ENCODE measurements at regions of chr10 and their contacts with region 1.

Region 1: DNA sequence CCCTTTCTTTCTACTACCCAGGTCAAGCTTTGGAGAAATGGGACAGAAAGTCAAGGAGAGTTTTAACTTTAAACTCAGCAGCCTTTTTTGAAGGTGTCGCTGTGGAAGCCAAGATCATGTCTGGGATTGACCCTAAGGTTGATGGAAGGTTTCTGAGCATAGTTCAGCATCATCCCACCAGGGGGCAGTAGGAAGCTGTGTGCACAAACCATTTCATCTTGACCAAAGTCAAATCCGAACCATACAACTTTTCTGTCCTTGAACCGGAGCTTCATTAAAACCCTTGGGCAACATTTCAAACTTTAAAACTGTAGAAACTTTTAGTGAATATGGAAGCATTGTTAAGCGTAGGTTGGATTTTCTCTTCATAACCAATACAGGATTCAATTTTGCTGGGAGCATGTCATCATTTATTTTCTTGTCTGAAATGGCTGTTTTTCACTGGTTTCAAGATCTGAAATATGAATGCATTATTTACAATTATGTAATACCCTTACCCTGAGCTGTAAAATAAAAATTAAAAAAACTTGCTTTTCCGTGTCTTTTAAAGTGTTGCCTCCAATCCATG is 214.4 kb upstream of the KIAA1217 start:
- DNase-seq: peak; percentile 24 to 61
- ATAC-seq: peak; percentile 55 to 89 (median 80)
- H3K4me3 ChIP-seq: peak overlapping the region in 1 of 10 donors; percentile 21
- H3K27ac ChIP-seq: peak overlapping the region in 1 of 10 donors; percentile 6
- H3K4me1 ChIP-seq: peaks cover 0 to 7% (median 0%) of the 10 kb centered on the region in 9 donors
- H3K27me3 ChIP-seq: no peaks in the 10 kb centered on the region
- CTCF ChIP-seq: peak; percentile 78 to 97 (median 90)

Region 2: GRCh38 chr10:24202181-24202570 is 207.6 kb after region 1 on chr10:
- intact Hi-C with region 1: loop called in 5 of 10 experiments (anchors 1 to 5 kb)
- DNase-seq: no peak
- ATAC-seq: peak in 2 of 8 donors; percentile 12 to 31
- H3K4me3 ChIP-seq: no peak overlapping the region
- H3K27ac ChIP-seq: peak overlapping the region in 5 of 10 donors; percentile 2 to 61 (median 10)
- H3K4me1 ChIP-seq: peaks cover 5 to 57% (median 16%) of the 10 kb centered on the region in 9 donors
- H3K27me3 ChIP-seq: no peaks in the 10 kb centered on the region
- CTCF ChIP-seq: no peak

Region 3: GRCh38 chr10:24292304-24293293 is 298.0 kb after region 1 on chr10:
- intact Hi-C with region 1: loop called in 1 of 10 experiments (anchors 10 kb)
- DNase-seq: no peak
- ATAC-seq: no peak
- H3K4me3 ChIP-seq: no peak overlapping the region
- H3K27ac ChIP-seq: peak overlapping the region in 8 of 10 donors; percentile 34 to 73 (median 69)
- H3K4me1 ChIP-seq: peaks cover 4 to 42% (median 29%) of the 10 kb centered on the region in 9 donors
- H3K27me3 ChIP-seq: no peaks in the 10 kb centered on the region
- CTCF ChIP-seq: no peak

Region 4: GRCh38 chr10:24349379-24350001 is 354.9 kb after region 1 on chr10:
- intact Hi-C with region 1: loop called in 1 of 10 experiments (anchors 10 kb)
- DNase-seq: no peak
- ATAC-seq: peak in 4 of 8 donors; percentile 40 to 55 (median 46)
- H3K4me3 ChIP-seq: no peak overlapping the region
- H3K27ac ChIP-seq: peak overlapping the region in 5 of 10 donors; percentile 12 to 61 (median 47)
- H3K4me1 ChIP-seq: peaks cover 0 to 59% (median 36%) of the 10 kb centered on the region in 9 donors
- H3K27me3 ChIP-seq: no peaks in the 10 kb centered on the region
- CTCF ChIP-seq: no peak

Region 5: DNA sequence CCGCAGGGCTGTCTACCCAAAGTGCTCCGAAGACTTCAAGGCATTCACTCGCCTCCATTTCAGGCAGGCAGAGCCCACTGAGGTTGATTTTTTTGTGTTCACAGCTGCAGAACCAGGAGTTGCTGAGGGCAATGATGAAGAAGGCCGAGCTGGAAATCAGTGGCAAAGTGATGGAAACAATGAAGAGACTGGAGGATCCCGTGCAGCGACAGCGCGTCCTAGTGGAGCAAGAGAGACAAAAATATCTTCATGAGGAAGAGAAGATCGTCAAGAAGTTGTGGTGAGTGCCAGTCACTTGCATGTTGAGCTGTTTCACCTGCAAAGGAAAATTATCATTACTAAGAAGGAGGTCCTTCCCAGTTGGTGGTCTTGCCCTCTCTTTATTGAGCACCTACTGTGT is 518.6 kb after region 1 on chr10:
- intact Hi-C with region 1: loop called in 9 of 10 experiments (anchors 2 to 10 kb)
- DNase-seq: no peak
- ATAC-seq: no peak
- H3K4me3 ChIP-seq: no peak overlapping the region
- H3K27ac ChIP-seq: no peak overlapping the region
- H3K4me1 ChIP-seq: no peaks in the 10 kb centered on the region
- H3K27me3 ChIP-seq: no peaks in the 10 kb centered on the region
- CTCF ChIP-seq: peak in 6 of 9 donors; percentile 14 to 39 (median 24)

Region 6: GRCh38 chr10:24518981-24519597 is 524.5 kb after region 1 on chr10:
- intact Hi-C with region 1: loop called in 8 of 10 experiments (anchors 2 to 10 kb)
- DNase-seq: peak; percentile 18 to 75
- ATAC-seq: peak; percentile 21 to 77 (median 68)
- H3K4me3 ChIP-seq: no peak overlapping the region
- H3K27ac ChIP-seq: peak overlapping the region in 2 of 10 donors; percentile 2 to 10
- H3K4me1 ChIP-seq: peaks cover 0 to 11% (median 6%) of the 10 kb centered on the region in 9 donors
- H3K27me3 ChIP-seq: no peaks in the 10 kb centered on the region
- CTCF ChIP-seq: peak; percentile 69 to 85 (median 75)

Measured in heart right ventricle (tissue), 16 donors.